Posterior vena cava (tissue), 2 donors: ENCODE measurements at regions of chr3 and their contacts with region 1.

Region 1: GRCh38 chr3:60384341-60384740 is 866.9 kb downstream of the FHIT start:
- DNase-seq: no peak

Region 2: DNA sequence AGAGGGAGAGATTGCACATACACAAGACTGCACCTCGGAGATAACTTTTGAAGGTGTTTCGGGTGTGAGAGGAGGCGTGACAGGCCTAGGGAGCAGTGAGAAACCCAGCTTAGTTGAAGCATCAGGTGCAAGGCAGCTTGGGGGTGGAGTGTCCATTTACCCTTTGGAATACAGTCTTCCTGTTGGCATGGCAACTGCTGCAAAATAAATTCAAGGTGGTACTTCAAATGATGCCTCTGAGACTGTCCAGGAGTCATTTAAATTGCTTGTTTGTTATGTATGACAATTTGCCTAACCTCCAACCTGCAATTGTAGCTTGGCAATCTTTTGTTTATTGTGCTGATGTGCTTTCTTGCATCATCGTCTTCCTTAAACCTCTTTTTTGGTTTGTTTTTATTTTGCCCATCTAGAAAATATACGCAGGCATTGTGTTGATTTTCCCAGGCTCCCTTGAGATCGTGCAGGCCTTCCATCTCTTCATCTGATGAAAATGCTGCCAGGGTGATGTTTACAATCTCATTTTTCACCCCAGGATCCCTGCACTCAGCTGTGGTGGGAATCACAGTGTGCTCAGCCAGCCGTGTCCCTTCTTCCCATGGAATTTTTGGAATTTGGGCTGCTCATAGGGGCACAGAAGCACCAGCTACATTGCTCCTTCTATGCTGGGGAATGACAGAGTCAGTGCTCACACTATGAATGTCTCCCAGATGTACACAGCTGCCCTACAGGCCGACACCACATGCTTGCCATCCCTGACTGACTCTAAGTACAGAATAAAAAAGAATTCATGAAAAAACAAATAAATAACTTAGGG is 751.4 kb before region 1 on chr3:
- intact Hi-C with region 1: loop called in 1 of 2 experiments (anchors 5 kb)
- DNase-seq: no peak

Region 3: GRCh38 chr3:60313951-60314461 is 70.3 kb before region 1 on chr3:
- intact Hi-C with region 1: no loop called
- DNase-seq: no peak